PC-9 (cell line): ENCODE measurements at regions of chr1 and their contacts with region 1.

Region 1: DNA sequence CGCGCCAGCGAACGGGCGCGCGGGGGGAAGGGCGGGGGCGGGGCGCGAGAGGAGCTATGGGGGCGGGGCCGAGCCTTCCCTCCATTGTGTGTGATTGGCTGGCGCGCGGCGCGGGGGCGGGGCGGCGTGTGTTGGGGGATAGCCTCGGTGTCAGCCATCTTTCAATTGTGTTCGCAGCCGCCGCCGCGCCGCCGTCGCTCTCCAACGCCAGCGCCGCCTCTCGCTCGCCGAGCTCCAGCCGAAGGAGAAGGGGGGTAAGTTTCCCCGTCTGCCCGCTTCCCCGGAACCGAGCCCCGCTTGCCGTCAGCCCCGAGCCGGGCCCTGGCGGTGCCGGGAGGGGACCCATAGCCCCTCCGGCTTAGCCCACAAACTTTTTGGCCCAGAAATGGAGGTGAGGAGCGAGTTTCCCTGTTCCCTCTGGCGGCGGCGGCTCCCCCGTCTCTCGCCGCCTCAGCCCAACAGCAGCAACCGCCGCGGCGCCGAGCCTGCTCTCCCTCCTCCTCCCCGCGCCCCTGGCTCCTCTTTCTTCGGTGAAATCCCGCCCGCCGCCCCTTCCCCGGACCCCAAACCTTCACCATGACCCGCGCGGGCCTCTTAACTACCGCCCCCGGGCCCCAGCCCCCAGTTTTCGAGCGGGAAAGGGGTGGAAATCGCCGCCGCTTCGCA is at the start of gene H3-3A:
- DNase-seq: peak; percentile 78 to 99
- H3K4me3 ChIP-seq: peak within 1 kb of the TSS; percentile 95
- H3K27ac ChIP-seq: peak within 1 kb of the TSS; percentile 94
- H3K4me1 ChIP-seq: peaks cover 23% of the 10 kb centered on the region
- H3K27me3 ChIP-seq: no peaks in the 10 kb centered on the region
- CTCF ChIP-seq: 0 out of 2 replicates have a peak, but pooled peaks have one; percentile 11
- total RNA-seq, gene H3-3A: 404 and 584 TPM in 2 replicates

Region 2: DNA sequence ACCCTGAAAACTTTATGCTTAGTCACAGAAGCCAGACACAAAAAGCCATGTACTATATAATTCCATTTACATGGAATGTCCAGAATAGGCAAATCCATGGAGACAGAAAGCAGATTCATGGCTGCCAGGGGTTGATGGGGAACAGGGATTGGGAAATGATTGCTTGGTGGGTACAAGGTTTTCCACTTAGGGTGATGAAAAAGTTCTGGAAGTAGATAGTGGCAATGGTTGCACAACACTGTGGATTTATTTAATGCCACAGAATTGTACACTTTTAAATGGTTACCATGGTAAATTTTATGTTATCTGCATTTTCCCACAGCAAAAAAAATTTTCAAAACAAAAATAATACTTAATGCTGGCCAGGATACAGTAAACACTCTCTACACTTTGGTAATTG is 450.4 kb before region 1 on chr1:
- CTCF ChIA-PET with region 1: no interaction called
- POLR2A ChIA-PET with region 1: interaction called, 47 read pairs
- intact Hi-C with region 1: no loop called
- DNase-seq: peak in 1 of 2 experiments; percentile 10
- H3K4me3 ChIP-seq: no peak overlapping the region
- H3K27ac ChIP-seq: peak overlapping the region; percentile 43
- H3K4me1 ChIP-seq: peaks cover 15% of the 10 kb centered on the region
- H3K27me3 ChIP-seq: no peaks in the 10 kb centered on the region
- CTCF ChIP-seq: no peak

Region 3: DNA sequence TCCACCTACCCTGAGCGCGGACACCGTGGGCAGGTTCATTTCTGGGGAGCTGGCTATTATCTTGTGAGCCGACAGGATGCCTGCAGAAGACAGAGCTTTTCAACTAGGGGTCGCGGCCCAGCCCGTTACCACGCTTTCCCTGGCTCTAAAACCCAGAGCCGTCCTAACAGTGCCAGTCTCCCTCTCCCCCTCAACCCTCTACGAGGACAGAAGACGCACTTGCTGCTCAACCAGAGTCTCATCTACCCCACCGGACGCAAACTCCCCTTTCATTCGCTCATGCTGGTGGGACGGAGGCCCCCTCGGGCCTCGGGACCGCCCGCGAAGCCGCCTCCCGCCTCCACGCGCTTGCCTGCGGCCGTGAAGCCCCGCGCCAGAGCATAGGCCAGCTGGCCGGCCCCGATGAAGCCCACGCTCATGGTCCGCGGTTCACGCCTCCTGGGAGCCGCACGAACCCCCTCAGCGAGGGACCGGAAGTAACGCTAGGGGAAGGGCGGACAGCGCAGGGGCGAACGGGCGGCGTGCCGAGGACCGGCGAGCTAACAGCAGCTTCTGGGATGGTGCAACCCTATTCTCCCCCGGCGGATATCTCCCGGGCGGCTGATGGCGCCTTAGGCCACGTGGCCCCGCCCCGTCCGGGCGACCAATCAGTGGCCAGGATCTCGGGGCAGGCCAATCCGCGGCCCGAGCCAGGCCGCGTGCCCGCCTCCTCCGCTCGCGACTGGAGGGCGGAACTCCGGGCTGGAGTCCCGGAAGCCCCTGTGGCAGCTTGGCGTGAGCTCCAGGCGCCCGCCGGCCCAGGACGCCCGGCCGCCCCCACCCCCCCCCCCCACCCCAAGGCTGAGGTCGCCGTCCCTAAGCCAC is 138.8 kb before region 1 on chr1 and contains the start of gene PYCR2:
- CTCF ChIA-PET with region 1: no interaction called
- POLR2A ChIA-PET with region 1: interaction called, 6 read pairs
- intact Hi-C with region 1: loop called (anchors 2 kb)
- DNase-seq: peak; percentile 86 to 99
- H3K4me3 ChIP-seq: peak within 1 kb of the TSS; percentile 100
- H3K27ac ChIP-seq: peak within 1 kb of the TSS; percentile 72
- H3K4me1 ChIP-seq: peaks cover 16% of the 10 kb centered on the region
- H3K27me3 ChIP-seq: no peaks in the 10 kb centered on the region
- CTCF ChIP-seq: no peak
- total RNA-seq, gene PYCR2: 100 and 112 TPM in 2 replicates

Region 4: DNA sequence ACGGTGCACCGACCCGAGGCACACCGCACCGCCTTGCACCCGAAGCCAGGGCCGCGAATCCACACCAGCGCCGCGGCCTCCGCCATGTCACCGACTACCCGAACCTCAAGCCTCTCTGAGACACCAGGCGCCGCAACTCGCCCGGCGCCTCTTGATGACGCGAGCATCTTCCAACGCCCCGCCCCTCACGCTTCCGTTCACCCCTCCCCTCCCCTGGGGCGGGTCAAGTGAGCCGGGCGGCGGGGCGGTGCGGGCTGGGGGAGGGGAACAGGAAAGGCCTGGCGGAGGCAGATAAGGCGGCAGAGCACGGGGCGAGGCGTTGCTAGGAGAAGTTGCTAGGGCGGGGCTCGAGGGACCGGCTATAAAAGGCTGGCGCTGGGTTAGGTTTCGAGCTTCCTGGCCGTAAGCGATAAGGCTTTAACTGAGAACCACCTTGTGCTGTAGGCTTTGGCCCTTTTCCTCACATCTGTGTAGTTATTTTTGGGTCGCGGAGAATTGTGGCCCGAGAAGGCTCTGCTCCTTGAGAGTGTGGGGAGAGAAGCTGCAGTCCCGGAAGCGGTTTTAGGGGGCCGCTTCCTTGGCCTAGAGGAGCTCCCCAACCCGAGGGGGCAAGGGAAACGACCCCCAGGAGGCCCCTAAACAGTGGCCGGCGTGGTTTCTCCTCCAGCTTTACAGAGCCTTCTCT is 63.3 kb before region 1 on chr1 and contains the start of gene SDE2:
- CTCF ChIA-PET with region 1: interaction called, 3 read pairs
- POLR2A ChIA-PET with region 1: interaction called, 10 read pairs
- intact Hi-C with region 1: loop called (anchors 1 kb)
- DNase-seq: peak; percentile 92 to 100
- H3K4me3 ChIP-seq: peak within 1 kb of the TSS; percentile 79
- H3K27ac ChIP-seq: peak within 1 kb of the TSS; percentile 67
- H3K4me1 ChIP-seq: peaks cover 27% of the 10 kb centered on the region
- H3K27me3 ChIP-seq: no peaks in the 10 kb centered on the region
- CTCF ChIP-seq: no peak
- total RNA-seq, gene SDE2: 16.0 and 17.3 TPM in 2 replicates

Region 5: DNA sequence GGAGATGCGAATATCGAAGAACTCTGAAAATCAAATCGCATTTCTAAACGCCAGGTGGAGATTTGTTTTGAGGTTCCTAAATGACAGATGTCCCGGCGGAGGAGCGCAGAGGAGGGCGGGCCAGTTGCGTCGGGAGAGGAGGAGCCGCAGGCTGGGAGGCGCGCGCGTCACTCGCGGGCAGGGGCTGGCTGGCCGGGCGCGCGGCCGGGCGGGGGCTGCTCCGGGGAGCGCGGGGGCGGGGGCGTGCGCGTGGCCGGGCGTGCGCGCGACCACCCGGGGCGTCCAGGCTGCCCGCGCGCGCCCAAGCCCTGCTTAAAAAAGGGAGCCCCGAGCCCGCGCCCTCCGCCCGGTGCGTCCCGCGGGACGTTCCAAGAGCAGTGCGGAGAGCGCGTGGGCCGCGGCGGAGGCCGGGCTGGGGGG is 47.1 kb after region 1 on chr1:
- CTCF ChIA-PET with region 1: interaction called, 29 read pairs
- POLR2A ChIA-PET with region 1: no interaction called
- intact Hi-C with region 1: loop called (anchors 1 kb)
- DNase-seq: peak; percentile 70 to 91
- H3K4me3 ChIP-seq: peak overlapping the region; percentile 82
- H3K27ac ChIP-seq: peak overlapping the region; percentile 67
- H3K4me1 ChIP-seq: peaks cover 31% of the 10 kb centered on the region
- H3K27me3 ChIP-seq: no peaks in the 10 kb centered on the region
- CTCF ChIP-seq: no peak

Region 6: DNA sequence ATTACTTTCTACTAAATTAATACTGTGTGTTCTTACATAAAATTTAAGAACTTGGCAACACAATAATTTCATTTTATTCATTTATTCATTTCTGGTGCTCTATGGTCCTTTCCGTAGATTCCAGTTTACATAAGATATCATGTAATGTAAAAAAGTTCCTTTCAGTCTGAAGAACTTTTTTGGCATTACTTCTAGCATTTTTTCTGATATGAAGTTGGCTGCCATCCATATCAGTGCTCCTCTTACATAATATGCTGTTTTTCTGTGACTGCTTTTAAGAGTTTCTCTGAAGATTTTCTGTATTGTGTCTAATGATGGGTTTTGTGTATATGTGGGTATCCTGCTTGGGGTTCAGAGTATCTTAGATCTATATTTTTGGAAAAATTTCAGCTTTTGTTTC is 211.4 kb after region 1 on chr1:
- CTCF ChIA-PET with region 1: no interaction called
- POLR2A ChIA-PET with region 1: no interaction called
- intact Hi-C with region 1: loop called (anchors 10 kb)
- DNase-seq: no peak
- H3K4me3 ChIP-seq: no peak overlapping the region
- H3K27ac ChIP-seq: no peak overlapping the region
- H3K4me1 ChIP-seq: no peaks in the 10 kb centered on the region
- H3K27me3 ChIP-seq: no peaks in the 10 kb centered on the region
- CTCF ChIP-seq: no peak